ENCODE measurements at regions of chr12 and their contacts with region 1.

Region 1: DNA sequence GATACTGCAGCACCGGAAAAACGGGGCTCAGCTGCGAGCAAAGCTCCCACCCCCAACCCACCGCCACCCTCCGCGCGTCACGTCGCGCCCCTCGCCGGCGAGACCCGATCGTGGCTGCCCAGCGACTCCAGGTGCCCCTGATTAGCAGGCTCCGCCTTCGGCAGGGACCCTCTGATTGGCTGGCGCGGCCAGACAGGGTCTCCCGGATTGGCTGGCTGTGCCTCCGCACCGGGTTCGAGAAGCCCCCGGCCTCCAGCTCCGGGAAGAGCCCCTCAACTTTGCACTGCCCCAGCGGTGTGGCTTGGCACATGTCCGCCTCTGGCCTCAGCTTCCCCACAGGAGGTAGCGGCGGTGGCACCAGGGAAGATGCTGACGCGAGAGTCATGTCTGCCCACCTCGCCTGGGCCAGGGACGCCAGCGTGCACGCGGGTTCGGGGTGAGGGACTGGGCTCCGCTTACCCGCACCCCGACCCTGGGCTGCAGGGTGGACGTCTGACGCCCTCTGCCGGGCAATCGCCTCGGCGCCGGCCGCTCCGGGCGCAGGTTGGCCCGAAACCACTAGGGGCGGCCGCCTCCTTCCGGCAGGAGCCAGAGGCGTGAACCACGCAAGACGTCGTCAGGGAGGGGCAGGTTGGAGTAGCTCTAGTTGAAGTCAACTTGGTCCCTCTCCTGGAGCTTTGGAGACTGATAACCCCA is 498 bp upstream of the RHOF start:
- DNase-seq: peak; percentile 86 to 97 (median 90)
- ATAC-seq: peak; percentile 82
- H3K4me3 ChIP-seq: peak overlapping the region; percentile 57
- H3K27ac ChIP-seq: peak overlapping the region; percentile 81
- H3K4me1 ChIP-seq: peaks cover 35 to 81% of the 10 kb centered on the region in 2 experiments
- H3K27me3 ChIP-seq: no peaks in the 10 kb centered on the region
- CTCF ChIP-seq: peak; percentile 100
- EP300 ChIP-seq: no peak; the same call in 1 of the 2 replicates
- POLR2A ChIP-seq: 0 out of 2 replicates have a peak, but pooled peaks have one; percentile 5
- RAD21 ChIP-seq: peak; percentile 98

Region 2: GRCh38 chr12:121697098-121697698 is 96.8 kb before region 1 on chr12:
- CTCF ChIA-PET with region 1: interaction called, 66 read pairs
- POLR2A ChIA-PET with region 1: interaction called, 3 read pairs
- in situ Hi-C with region 1: loop called (anchors 5 kb)
- intact Hi-C with region 1: loop called (anchors 1 kb)
- DNase-seq: peak; percentile 35 to 65 (median 40)
- ATAC-seq: 0 out of 3 replicates have a peak, but pooled peaks have one; percentile 26
- H3K4me3 ChIP-seq: no peak overlapping the region
- H3K27ac ChIP-seq: no peak overlapping the region
- H3K4me1 ChIP-seq: no peaks in the 10 kb centered on the region; a peak in 1 of 5 replicates
- H3K27me3 ChIP-seq: no peaks in the 10 kb centered on the region
- CTCF ChIP-seq: peak; percentile 47 to 75 (median 49); a peak in 5 of 6 replicates
- EP300 ChIP-seq: no peak
- POLR2A ChIP-seq: no peak
- RAD21 ChIP-seq: peak; percentile 92 to 94

Region 3: DNA sequence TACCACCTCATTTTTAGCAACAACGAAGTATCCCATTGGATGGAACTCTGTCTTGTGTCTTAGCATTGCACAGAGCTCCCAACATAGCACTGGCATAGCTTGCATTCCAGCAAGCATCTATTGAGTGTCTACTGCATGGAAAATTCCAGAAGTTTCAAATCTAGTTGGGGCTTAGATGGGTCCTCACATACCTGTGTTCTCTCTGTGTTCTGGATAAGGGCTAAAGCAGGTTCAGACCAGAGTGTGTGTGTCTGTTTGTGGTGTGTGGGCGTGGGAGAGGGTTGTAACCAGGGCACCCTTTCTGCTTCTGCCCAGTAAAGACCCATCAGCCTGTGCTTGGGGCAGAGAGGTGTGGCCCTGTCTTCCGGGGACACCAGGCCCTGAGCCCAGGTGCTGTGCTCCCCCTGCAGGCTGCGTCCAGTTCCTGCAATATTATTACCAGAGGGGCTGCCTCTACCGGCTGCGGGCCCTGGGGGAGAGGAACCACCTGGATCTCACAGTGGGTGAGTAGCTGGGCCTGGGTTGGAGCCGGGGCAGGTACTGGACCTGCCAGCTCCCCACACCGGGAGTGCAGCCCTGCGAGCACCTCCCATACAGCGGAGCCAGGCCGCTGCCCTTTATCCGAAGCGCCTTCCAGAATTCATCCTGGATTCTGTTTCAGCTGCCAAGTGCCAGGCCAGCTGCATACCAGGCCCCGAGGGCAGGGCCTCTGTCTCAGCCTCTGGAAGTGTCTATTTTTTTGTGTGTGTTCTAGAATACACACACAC is 20.8 kb before region 1 on chr12:
- CTCF ChIA-PET with region 1: interaction called, 33 read pairs
- POLR2A ChIA-PET with region 1: interaction called, 4 read pairs
- in situ Hi-C with region 1: no loop called
- intact Hi-C with region 1: loop called (anchors 1 kb)
- DNase-seq: peak; percentile 83 to 87 (median 86)
- ATAC-seq: peak; percentile 88
- H3K4me3 ChIP-seq: no peak overlapping the region
- H3K27ac ChIP-seq: no peak overlapping the region
- H3K4me1 ChIP-seq: peaks cover 14 to 51% of the 10 kb centered on the region in 2 experiments; a peak in 4 of 5 replicates
- H3K27me3 ChIP-seq: no peaks in the 10 kb centered on the region
- CTCF ChIP-seq: peak; percentile 95 to 97 (median 96)
- EP300 ChIP-seq: no peak
- POLR2A ChIP-seq: no peak
- RAD21 ChIP-seq: peak; percentile 94 to 98

Region 4: DNA sequence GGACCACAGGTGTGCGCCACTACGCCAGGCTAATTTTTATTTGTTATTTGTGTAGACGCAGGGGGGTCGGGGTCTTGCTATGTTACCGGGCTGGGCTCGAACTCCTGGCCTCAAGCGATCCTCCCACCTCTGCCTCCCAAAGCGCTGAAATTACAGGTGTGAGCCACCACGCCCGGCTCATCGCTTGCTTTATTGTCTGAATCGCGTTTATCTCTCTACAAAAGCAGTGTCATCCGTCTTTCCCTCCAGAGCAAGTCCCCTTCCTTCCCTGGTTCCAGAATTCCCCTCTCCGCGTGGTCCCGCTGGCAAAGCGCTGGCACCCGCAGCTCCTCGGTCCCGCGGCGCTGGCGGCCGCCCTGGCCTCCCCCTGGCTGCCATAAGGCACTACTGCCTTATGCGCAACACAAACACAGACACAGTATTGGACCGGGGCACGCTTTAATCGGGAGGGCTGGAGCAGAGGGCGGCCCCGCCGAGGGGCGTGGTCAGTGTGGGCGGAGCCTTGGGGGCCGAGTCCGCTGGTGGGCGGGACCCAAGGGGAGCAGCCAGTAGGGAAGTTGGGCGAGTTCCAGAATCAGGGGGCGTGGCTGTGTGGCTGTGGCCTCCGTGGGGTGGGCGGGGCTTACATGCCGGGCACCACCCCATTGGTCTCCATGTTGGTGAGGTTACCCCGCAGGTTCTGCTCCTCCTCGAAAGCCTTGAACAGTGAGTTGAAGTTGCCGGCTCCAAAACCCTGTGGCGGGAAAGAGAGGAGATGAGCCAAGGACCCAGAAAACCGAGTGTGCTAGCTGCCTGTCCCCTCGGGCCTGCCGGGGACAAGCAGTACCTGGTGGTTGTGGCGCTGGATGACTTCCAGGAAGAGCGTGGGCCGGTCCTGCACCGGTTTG is 45.4 kb after region 1 on chr12:
- CTCF ChIA-PET with region 1: interaction called, 6 read pairs
- POLR2A ChIA-PET with region 1: interaction called, 7 read pairs
- in situ Hi-C with region 1: no loop called
- intact Hi-C with region 1: loop called (anchors 2 kb)
- DNase-seq: peak; percentile 99 to 100 (median 100)
- ATAC-seq: peak; percentile 97
- H3K4me3 ChIP-seq: peak overlapping the region; percentile 75
- H3K27ac ChIP-seq: peak overlapping the region; percentile 89
- H3K4me1 ChIP-seq: peaks cover 18 to 30% of the 10 kb centered on the region in 2 experiments
- H3K27me3 ChIP-seq: no peaks in the 10 kb centered on the region
- CTCF ChIP-seq: peak; percentile 58 to 77 (median 63); a peak in 5 of 6 replicates
- EP300 ChIP-seq: no peak
- POLR2A ChIP-seq: peak; percentile 91
- RAD21 ChIP-seq: no peak; a peak in 2 of 4 replicates

Region 5: GRCh38 chr12:121894633-121895032 is 100.6 kb after region 1 on chr12:
- CTCF ChIA-PET with region 1: interaction called, 50 read pairs
- POLR2A ChIA-PET with region 1: interaction called, 16 read pairs
- in situ Hi-C with region 1: loop called (anchors 5 kb)
- intact Hi-C with region 1: no loop called
- DNase-seq: peak in 2 of 4 experiments; percentile 32 to 47
- ATAC-seq: peak; percentile 28; the same call in 2 of the 3 replicates
- H3K4me3 ChIP-seq: no peak overlapping the region
- H3K27ac ChIP-seq: peak overlapping the region; percentile 73; the same call in 1 of the 3 replicates
- H3K4me1 ChIP-seq: peaks cover 24 to 27% of the 10 kb centered on the region in 2 experiments
- H3K27me3 ChIP-seq: no peaks in the 10 kb centered on the region
- CTCF ChIP-seq: peak; percentile 25 to 38 (median 37); a peak in 2 of 6 replicates
- EP300 ChIP-seq: no peak
- POLR2A ChIP-seq: no peak
- RAD21 ChIP-seq: no peak; a peak in 1 of 4 replicates

Measured in K562 (cell line).